Stomach (tissue), 19 donors: ENCODE measurements at regions of chr1 and their contacts with region 1.

Region 1: GRCh38 chr1:53945433-53946251 is at the start of gene IFT25:
- DNase-seq: peak; percentile 99
- H3K4me3 ChIP-seq: peak within 1 kb of the TSS; percentile 77 to 92 (median 84)
- H3K27ac ChIP-seq: peak within 1 kb of the TSS; percentile 90 to 99 (median 92)
- H3K4me1 ChIP-seq: peaks cover 19 to 79% (median 58%) of the 10 kb centered on the region in 4 donors
- H3K27me3 ChIP-seq: no peaks in the 10 kb centered on the region
- CTCF ChIP-seq: peak in 1 of 7 experiments; percentile 7
- EP300 ChIP-seq: no peak
- POLR2A ChIP-seq: peak in 1 of 4 donors; percentile 22
- total RNA-seq, gene IFT25: 5.8 to 71.2 (median 43.3) TPM

Region 2: DNA sequence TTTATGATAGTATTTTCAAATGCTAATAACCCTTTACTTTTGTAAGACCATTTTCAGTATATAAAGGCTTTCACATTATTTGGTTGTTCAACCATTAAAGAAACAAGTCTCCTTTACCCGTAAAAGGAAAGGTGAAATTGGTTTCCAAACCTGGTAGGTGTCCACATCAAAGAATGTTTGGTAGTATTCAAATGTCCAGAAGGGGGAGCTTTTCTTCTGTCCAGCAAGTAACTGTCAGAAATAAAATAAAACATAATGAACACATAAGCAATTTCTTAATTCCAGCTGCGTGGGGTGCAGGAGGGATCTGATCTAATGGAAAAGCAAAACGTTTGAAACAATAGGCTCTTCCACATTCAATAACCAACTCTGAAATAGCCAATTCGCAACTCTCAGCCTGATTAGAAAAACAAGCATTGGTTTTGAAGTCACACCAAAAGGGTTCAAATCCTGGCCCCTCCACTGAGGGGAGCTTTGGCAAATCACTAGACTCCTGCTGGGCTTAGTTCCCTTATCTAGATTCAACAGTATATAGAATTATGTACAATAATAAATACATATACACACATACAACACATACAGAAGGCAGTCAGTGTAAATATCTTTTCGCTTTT is 67.0 kb before region 1 on chr1:
- intact Hi-C with region 1: loop called (anchors 5 kb)
- DNase-seq: peak in 1 of 2 donors; percentile 69
- H3K4me3 ChIP-seq: no peak overlapping the region
- H3K27ac ChIP-seq: no peak overlapping the region
- H3K4me1 ChIP-seq: peaks cover 0 to 8% (median 2%) of the 10 kb centered on the region in 4 donors
- H3K27me3 ChIP-seq: no peaks in the 10 kb centered on the region
- CTCF ChIP-seq: peak in 5 of 7 experiments; percentile 40 to 64 (median 53)
- EP300 ChIP-seq: no peak
- POLR2A ChIP-seq: no peak

Region 3: GRCh38 chr1:53889304-53890298 is 56.0 kb before region 1 on chr1 and contains the start of gene YIPF1:
- intact Hi-C with region 1: loop called (anchors 5 kb)
- DNase-seq: peak; percentile 92 to 97
- H3K4me3 ChIP-seq: peak within 1 kb of the TSS; percentile 68 to 96 (median 84)
- H3K27ac ChIP-seq: peak within 1 kb of the TSS; percentile 78 to 89 (median 87)
- H3K4me1 ChIP-seq: peaks cover 10 to 36% (median 18%) of the 10 kb centered on the region in 4 donors
- H3K27me3 ChIP-seq: no peaks in the 10 kb centered on the region
- CTCF ChIP-seq: no peak
- EP300 ChIP-seq: peak; percentile 17
- POLR2A ChIP-seq: no peak
- total RNA-seq, gene YIPF1: 7.6 to 44.3 (median 14.1) TPM

Region 4: DNA sequence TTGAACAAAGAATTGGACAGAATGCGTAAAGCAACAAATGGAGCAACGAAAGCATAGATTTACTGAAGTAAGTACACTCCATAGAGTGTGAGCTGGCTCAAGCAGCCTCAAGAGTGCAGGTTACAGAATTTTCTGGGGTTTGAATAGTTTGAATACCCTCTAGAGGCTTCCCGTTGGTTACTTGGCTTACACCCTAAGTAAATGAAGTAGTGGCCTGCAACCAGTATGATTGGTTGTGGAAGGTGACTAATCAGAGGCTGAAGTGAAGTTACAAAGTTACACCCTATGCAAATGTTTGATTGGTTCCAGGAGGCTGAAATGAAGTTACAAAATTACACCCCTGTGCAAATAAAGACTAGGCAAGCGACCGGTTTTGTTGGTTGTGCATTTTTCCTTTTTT is 118.7 kb after region 1 on chr1:
- intact Hi-C with region 1: no loop called
- DNase-seq: no peak
- H3K4me3 ChIP-seq: no peak overlapping the region
- H3K27ac ChIP-seq: no peak overlapping the region
- H3K4me1 ChIP-seq: no peaks in the 10 kb centered on the region
- H3K27me3 ChIP-seq: no peaks in the 10 kb centered on the region
- CTCF ChIP-seq: no peak
- EP300 ChIP-seq: no peak
- POLR2A ChIP-seq: no peak